Activated CD4-positive, alpha-beta T cell treated with anti-CD3 and anti-CD28 coated beads for 36 hours (primary cell): ENCODE measurements at regions of chr2 and their contacts with region 1.

Region 1: DNA sequence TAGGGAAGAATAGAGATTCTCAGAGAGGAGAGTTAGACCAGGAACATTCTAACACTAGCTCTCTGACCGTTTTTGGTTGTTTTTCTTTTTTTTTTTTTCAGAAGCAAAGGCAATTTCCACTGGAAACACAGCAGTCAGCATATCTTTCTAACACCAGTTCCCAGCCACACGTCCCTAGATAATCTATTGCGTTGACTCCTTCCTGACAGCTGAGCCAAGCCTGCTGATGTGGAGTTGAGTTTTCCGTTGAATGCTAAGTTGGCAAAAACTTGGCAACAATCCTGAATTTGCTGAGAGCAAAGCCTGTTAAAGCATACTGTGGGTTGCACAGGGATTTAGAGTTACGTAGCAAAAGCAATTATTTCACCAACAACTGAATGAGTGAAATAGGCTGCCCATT is 19.3 kb downstream of the GAD1 start:
- DNase-seq: no peak
- ATAC-seq: no peak
- H3K4me3 Mint-ChIP-seq: no peak overlapping the region
- H3K27ac Mint-ChIP-seq: no peak overlapping the region
- H3K4me1 Mint-ChIP-seq: no peaks in the 10 kb centered on the region
- H3K27me3 Mint-ChIP-seq: peaks cover 6% of the 10 kb centered on the region

Region 2: DNA sequence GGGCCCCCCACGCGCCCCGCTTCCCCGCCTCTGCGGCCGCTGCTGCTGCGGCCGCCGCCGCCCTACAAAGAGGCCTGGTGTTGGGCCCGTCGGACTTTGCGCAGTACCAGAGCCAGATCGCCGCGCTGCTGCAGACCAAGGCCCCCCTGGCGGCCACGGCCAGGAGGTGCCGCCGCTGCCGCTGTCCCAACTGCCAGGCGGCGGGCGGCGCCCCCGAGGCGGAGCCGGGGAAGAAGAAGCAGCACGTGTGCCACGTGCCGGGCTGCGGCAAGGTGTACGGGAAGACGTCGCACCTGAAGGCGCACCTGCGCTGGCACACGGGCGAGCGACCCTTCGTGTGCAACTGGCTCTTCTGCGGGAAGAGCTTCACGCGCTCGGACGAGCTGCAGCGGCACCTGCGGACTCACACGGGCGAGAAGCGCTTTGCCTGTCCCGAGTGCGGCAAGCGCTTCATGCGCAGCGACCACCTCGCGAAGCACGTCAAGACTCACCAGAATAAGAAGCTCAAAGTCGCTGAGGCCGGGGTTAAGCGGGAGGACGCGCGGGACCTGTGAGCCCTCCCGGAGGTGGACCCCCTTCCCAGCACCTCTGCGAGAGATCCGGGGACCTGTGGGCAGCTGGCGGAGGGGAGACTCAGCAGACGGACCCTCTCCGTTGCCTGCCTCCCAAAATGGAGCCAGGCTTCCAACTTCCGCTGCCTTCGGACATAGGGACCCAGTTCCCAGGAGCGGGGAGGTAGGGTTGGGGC is 119.0 kb before region 1 on chr2:
- CTCF ChIA-PET with region 1: no interaction called
- POLR2A ChIA-PET with region 1: no interaction called
- intact Hi-C with region 1: no loop called
- DNase-seq: peak; percentile 71
- ATAC-seq: peak; percentile 47
- H3K4me3 Mint-ChIP-seq: peak overlapping the region; percentile 35
- H3K27ac Mint-ChIP-seq: no peak overlapping the region
- H3K4me1 Mint-ChIP-seq: peaks cover 24% of the 10 kb centered on the region
- H3K27me3 Mint-ChIP-seq: peaks cover 62% of the 10 kb centered on the region

Region 3: GRCh38 chr2:170822290-170823087 is 13.5 kb before region 1 on chr2:
- CTCF ChIA-PET with region 1: interaction called, 10 read pairs
- POLR2A ChIA-PET with region 1: interaction called, 3 read pairs
- intact Hi-C with region 1: no loop called
- DNase-seq: peak; percentile 76
- ATAC-seq: peak; percentile 65
- H3K4me3 Mint-ChIP-seq: peak overlapping the region; percentile 60
- H3K27ac Mint-ChIP-seq: no peak overlapping the region
- H3K4me1 Mint-ChIP-seq: peaks cover 38% of the 10 kb centered on the region
- H3K27me3 Mint-ChIP-seq: peaks cover 75% of the 10 kb centered on the region